Colonic mucosa (tissue), 4 donors: ENCODE measurements at regions of chr4 and their contacts with region 1.

Region 1: GRCh38 chr4:173505924-173506518 is 24.0 kb downstream of the HAND2 start:
- DNase-seq: peak; percentile 71
- H3K4me3 ChIP-seq: no peak overlapping the region
- H3K27ac ChIP-seq: no peak overlapping the region
- H3K4me1 ChIP-seq: no peaks in the 10 kb centered on the region
- H3K27me3 ChIP-seq: peaks cover 10% of the 10 kb centered on the region
- CTCF ChIP-seq: peak; percentile 72

Region 2: DNA sequence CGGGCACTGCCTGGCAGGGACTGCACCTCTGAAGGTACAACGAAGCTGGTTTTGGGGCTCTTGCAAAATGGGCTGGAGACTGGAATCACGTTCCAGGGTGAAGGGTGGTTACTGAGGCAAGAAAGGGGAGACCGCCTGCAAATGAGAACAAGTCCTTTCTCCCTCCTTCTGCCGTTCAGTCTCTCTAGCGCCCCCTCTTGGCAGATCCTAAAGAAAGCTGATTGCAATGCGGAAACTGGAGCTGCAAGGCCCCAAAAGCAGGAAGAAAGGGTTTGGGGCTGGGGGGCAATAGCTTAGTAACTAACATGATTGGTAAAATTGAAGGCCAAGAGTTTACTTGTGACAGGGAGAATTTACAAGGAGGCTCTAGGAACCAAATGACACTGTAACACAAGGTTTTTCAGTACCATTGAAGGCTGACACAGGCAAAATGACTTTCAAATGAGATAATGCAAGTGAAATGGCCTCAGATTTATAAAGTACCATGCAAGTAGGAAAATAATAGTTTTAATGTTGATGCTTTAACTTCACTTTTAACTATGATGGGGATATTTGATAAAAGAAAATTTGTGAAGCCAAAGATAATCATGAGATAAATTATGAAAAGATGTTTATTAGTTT is 246.7 kb after region 1 on chr4:
- intact Hi-C with region 1: loop called (anchors 5 kb)
- DNase-seq: peak; percentile 43
- H3K4me3 ChIP-seq: no peak overlapping the region
- H3K27ac ChIP-seq: no peak overlapping the region
- H3K4me1 ChIP-seq: no peaks in the 10 kb centered on the region
- H3K27me3 ChIP-seq: no peaks in the 10 kb centered on the region
- CTCF ChIP-seq: no peak

Region 3: GRCh38 chr4:173827707-173828106 is 321.7 kb after region 1 on chr4:
- intact Hi-C with region 1: loop called (anchors 10 kb)
- DNase-seq: no peak
- H3K4me3 ChIP-seq: no peak overlapping the region
- H3K27ac ChIP-seq: no peak overlapping the region
- H3K4me1 ChIP-seq: no peaks in the 10 kb centered on the region
- H3K27me3 ChIP-seq: no peaks in the 10 kb centered on the region
- CTCF ChIP-seq: no peak

Region 4: GRCh38 chr4:173990126-173990868 is 484.3 kb after region 1 on chr4:
- intact Hi-C with region 1: loop called (anchors 10 kb)
- DNase-seq: no peak
- H3K4me3 ChIP-seq: no peak overlapping the region
- H3K27ac ChIP-seq: no peak overlapping the region
- H3K4me1 ChIP-seq: no peaks in the 10 kb centered on the region
- H3K27me3 ChIP-seq: no peaks in the 10 kb centered on the region
- CTCF ChIP-seq: peak; percentile 23

Region 5: GRCh38 chr4:174119051-174119450 is 613.0 kb after region 1 on chr4:
- intact Hi-C with region 1: loop called (anchors 2 kb)
- DNase-seq: no peak
- H3K4me3 ChIP-seq: no peak overlapping the region
- H3K27ac ChIP-seq: no peak overlapping the region
- H3K4me1 ChIP-seq: no peaks in the 10 kb centered on the region
- H3K27me3 ChIP-seq: no peaks in the 10 kb centered on the region
- CTCF ChIP-seq: no peak

Region 6: GRCh38 chr4:174156239-174156826 is 650.3 kb after region 1 on chr4:
- intact Hi-C with region 1: loop called (anchors 10 kb)
- DNase-seq: no peak
- H3K4me3 ChIP-seq: no peak overlapping the region
- H3K27ac ChIP-seq: no peak overlapping the region
- H3K4me1 ChIP-seq: no peaks in the 10 kb centered on the region
- H3K27me3 ChIP-seq: no peaks in the 10 kb centered on the region
- CTCF ChIP-seq: peak; percentile 56